ENCODE measurements at regions of chr10 and their contacts with region 1.

Region 1: GRCh38 chr10:7866176-7866575 is 47.9 kb downstream of the TAF3 start:
- DNase-seq: no peak
- H3K4me3 ChIP-seq: no peak overlapping the region
- H3K4me3 Mint-ChIP-seq: no peak overlapping the region
- H3K27ac Mint-ChIP-seq: peak overlapping the region; percentile 7
- H3K4me1 ChIP-seq: peaks cover 13% of the 10 kb centered on the region
- H3K4me1 Mint-ChIP-seq: peaks cover 31% of the 10 kb centered on the region
- H3K27me3 ChIP-seq: no peaks in the 10 kb centered on the region
- H3K27me3 Mint-ChIP-seq: no peaks in the 10 kb centered on the region
- CTCF ChIP-seq: no peak

Region 2: DNA sequence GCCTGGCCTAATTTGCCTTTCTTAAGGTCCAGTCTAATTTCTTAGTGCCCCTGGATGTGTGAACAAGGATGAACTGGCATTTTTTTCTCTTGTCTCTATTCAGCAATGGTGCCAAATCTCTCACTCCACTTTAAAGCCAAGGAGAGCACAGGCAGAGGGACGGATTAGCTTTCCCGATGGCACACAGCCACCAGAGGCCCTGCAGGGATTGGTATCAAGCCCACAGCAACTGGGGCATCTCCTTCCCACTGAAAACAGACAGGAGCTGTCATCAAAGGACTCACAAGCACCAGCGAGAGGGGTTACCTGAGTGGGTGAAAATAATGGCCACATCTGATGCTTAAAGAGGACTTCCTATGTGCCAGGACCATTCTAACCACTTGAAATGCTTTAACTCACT is 282.6 kb before region 1 on chr10:
- CTCF ChIA-PET with region 1: no interaction called
- POLR2A ChIA-PET with region 1: no interaction called
- intact Hi-C with region 1: no loop called
- DNase-seq: no peak
- H3K4me3 ChIP-seq: no peak overlapping the region
- H3K4me3 Mint-ChIP-seq: no peak overlapping the region
- H3K27ac Mint-ChIP-seq: no peak overlapping the region
- H3K4me1 ChIP-seq: no peaks in the 10 kb centered on the region
- H3K4me1 Mint-ChIP-seq: no peaks in the 10 kb centered on the region
- H3K27me3 ChIP-seq: no peaks in the 10 kb centered on the region; the same call in 1 of the 2 replicates
- H3K27me3 Mint-ChIP-seq: peaks cover 2% of the 10 kb centered on the region
- CTCF ChIP-seq: no peak

Region 3: GRCh38 chr10:7971949-7972348 is 105.8 kb after region 1 on chr10:
- CTCF ChIA-PET with region 1: interaction called, 16 read pairs
- POLR2A ChIA-PET with region 1: no interaction called
- intact Hi-C with region 1: no loop called
- DNase-seq: no peak
- H3K4me3 ChIP-seq: no peak overlapping the region
- H3K4me3 Mint-ChIP-seq: no peak overlapping the region
- H3K27ac Mint-ChIP-seq: no peak overlapping the region
- H3K4me1 ChIP-seq: no peaks in the 10 kb centered on the region
- H3K4me1 Mint-ChIP-seq: no peaks in the 10 kb centered on the region
- H3K27me3 ChIP-seq: no peaks in the 10 kb centered on the region
- H3K27me3 Mint-ChIP-seq: no peaks in the 10 kb centered on the region
- CTCF ChIP-seq: no peak